Activated CD8-positive, alpha-beta memory T cell treated with anti-CD3 and anti-CD28 coated beads, Interleukin-2, amount 10 ng/mL, durations not matched to agents 7 days and 5 days (primary cell): ENCODE measurements at regions of chr14 and their contacts with region 1.

Region 1: DNA sequence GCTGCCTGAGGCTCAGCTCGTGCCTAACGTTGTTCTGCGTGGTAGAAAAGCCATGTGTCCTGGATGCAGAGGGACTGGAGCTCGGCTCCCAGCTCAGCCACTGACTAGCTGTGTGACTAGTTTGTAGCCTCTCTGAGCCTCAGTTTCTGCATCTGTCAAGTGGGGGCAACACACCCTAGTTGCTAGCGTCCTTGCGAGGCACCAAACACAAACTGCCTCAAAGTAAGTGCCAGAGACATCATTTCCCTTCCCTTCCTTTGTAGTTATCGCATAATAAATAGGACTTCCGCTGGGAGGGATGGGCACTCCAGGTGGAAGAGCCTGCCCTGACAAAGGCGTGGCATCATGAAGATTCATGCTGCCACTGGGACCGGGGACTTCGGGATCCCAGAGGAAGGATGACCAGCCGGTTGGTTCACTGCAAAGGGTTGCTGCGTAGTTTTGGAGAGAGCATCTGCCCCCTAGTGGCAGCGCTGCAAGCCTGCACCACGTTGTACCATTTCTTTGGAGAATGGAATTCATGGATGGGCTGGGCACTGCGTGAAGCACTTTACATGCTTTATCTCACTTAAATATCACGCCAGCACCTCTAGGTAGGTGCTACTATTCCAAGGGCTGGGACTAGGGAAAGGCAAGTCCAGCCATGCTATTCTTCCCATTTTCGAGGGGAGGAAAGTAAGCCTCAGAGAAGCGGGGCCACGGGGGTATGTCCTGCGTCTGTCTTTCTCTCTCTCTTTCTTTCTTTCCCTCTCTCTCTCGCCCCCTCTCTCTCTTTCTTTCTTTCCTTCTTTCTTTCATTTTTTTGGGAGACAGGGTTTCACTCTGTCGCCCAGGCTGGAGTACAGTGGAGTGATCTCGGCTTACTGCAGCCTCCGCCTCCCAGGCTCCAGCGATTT is 4.6 kb downstream of the CCDC197 start:
- DNase-seq: peak; percentile 72
- ATAC-seq: peak; percentile 87
- H3K4me3 Mint-ChIP-seq: no peak overlapping the region
- H3K27ac Mint-ChIP-seq: peak overlapping the region; percentile 17
- H3K4me1 Mint-ChIP-seq: peaks cover 33% of the 10 kb centered on the region
- H3K27me3 Mint-ChIP-seq: no peaks in the 10 kb centered on the region

Region 2: DNA sequence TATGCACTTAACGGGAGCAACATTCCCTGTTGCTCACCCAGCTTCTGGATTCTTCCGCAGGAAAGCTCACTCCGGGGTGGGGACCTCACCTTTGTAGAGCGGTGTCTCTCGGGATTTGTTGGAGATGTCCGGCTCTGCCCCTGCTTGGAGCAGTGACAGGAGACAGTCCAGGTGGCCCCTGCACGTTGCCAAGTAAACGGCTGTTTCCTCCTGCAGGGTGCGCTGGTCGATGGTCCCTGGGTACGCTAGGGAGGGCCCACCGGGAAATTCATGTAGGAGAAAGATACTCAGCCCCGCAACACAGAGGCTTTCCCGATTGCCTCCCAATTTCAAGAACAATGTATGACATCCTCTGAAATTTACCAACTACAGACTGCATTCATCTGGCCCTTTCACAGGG is 48.5 kb before region 1 on chr14:
- CTCF ChIA-PET with region 1: interaction called, 16 read pairs
- DNase-seq: no peak
- ATAC-seq: no peak
- H3K4me3 Mint-ChIP-seq: peak overlapping the region; percentile 99
- H3K27ac Mint-ChIP-seq: peak overlapping the region; percentile 99
- H3K4me1 Mint-ChIP-seq: peaks cover 89% of the 10 kb centered on the region
- H3K27me3 Mint-ChIP-seq: no peaks in the 10 kb centered on the region

Region 3: DNA sequence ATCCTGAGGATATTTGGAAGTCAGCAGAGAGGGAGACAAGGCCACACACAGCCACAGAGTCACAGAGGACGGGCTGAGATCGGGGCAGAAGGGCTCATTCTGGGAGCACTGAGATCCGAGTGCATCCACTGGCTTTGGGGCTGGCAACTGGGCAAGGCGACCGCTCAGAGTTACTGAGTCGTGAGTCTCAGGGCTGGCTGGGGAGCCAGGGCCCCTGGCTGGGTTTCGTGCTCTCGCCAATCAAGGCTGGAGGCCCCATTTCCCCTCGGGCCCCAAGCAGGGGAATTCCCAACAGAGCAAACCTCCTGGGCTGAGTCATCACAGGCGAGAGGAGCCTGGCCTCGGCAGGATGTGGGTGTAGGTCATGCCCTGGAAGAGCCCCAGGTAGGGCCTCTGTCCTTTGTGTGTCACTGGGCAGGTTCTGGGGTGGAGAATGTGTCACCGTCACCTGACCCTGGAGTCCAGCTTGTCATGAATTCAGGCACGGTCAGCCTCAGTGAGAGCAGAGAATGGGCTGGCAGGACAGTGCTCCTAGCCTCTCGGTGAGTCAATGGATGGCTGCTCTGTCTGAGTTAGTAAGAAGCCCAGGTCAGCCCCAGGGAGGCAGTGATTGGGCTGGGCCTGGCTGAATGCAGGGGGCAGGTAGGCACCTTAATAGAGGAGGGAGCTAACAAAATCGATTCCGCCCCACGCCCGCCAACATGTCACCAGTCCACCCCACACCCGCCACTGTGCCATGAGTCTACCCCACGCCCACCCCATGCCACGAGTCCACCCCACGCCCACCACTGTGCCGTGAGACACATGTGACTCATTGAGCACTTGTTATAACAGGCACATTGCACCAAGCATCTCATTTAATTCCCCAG is 42.3 kb before region 1 on chr14:
- CTCF ChIA-PET with region 1: interaction called, 14 read pairs
- DNase-seq: peak; percentile 98
- ATAC-seq: peak; percentile 71
- H3K4me3 Mint-ChIP-seq: peak overlapping the region; percentile 67
- H3K27ac Mint-ChIP-seq: peak overlapping the region; percentile 99
- H3K4me1 Mint-ChIP-seq: peaks cover 93% of the 10 kb centered on the region
- H3K27me3 Mint-ChIP-seq: no peaks in the 10 kb centered on the region

Region 4: GRCh38 chr14:93970549-93970946 is 31.2 kb before region 1 on chr14:
- CTCF ChIA-PET with region 1: interaction called, 32 read pairs
- DNase-seq: peak; percentile 80
- ATAC-seq: peak; percentile 62
- H3K4me3 Mint-ChIP-seq: peak overlapping the region; percentile 83
- H3K27ac Mint-ChIP-seq: peak overlapping the region; percentile 97
- H3K4me1 Mint-ChIP-seq: peaks cover 90% of the 10 kb centered on the region
- H3K27me3 Mint-ChIP-seq: no peaks in the 10 kb centered on the region

Region 5: DNA sequence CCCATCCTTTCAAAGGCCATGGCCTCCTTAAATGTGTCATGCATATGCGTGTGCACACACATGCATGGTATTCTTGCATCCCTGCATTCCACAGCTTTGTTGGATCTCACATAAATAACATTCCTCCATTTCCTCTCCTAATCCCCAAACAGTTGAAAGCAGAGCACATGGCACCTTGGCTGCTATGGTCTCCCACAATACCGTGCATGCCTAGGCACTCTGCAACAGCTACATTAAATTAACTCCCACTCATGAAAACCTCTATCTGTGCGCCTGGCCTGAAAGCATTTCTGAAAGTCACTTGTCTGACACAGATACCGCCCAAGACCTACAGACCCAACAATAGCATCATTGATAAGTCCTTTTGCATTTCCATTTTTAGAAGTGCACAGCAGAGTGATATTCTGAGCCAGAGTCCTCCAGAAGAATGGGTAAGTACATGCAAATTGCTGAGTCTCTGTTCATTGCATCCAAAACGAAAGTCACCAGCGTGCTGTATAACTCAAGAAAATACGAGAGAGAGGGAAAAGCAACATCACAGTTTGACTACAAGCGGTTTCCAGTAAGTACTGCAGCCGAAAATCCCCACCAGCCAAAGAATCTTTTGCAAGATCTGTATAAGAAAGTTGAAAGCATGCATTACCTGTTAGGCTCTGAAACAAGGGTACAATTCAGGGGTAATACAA is 25.8 kb before region 1 on chr14:
- CTCF ChIA-PET with region 1: interaction called, 33 read pairs
- DNase-seq: no peak
- ATAC-seq: peak; percentile 24
- H3K4me3 Mint-ChIP-seq: peak overlapping the region; percentile 83
- H3K27ac Mint-ChIP-seq: peak overlapping the region; percentile 93
- H3K4me1 Mint-ChIP-seq: peaks cover 92% of the 10 kb centered on the region
- H3K27me3 Mint-ChIP-seq: no peaks in the 10 kb centered on the region

Region 6: DNA sequence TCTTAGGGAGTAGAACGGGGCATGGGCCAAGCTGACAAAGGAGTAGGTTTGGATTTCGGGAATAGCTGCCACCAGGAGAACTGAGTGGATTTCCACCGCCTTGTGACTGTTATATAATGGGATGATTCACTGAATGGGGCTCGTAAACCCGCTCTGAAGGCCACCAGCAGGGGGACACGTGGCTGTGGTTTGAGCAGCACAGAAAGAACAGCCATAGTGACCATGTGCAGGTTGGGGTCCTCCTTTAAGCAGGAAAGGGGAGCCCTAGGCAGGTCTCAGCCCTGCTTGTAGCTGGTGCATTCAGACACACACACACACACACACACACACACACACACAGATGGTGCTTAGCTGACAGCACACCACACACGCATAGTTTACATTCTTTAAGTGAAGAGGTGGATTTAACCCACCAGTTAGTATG is 16.8 kb before region 1 on chr14:
- CTCF ChIA-PET with region 1: interaction called, 33 read pairs
- DNase-seq: no peak
- ATAC-seq: peak; percentile 14
- H3K4me3 Mint-ChIP-seq: no peak overlapping the region
- H3K27ac Mint-ChIP-seq: no peak overlapping the region
- H3K4me1 Mint-ChIP-seq: peaks cover 9% of the 10 kb centered on the region
- H3K27me3 Mint-ChIP-seq: no peaks in the 10 kb centered on the region

Region 7: DNA sequence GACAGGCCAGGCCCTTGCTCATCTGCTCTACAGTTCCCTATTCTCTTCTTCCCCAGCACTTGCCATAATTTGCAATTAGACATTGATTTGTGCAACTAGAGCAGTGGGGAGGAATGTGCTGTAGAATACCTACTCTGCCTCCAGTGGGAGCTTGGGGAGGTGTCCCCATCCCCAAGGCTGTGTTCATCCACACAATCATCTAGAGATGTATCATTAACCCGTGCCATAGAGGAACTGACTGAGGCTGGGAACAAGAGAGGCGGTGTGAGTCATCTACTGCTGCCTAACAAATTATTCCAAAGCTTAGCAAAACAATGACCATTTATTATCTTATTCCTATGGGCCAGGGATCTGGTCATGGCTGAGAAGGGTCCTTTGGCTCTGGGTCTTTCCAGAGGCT is 19.3 kb after region 1 on chr14:
- CTCF ChIA-PET with region 1: interaction called, 16 read pairs
- DNase-seq: no peak
- ATAC-seq: no peak
- H3K4me3 Mint-ChIP-seq: no peak overlapping the region
- H3K27ac Mint-ChIP-seq: peak overlapping the region; percentile 76
- H3K4me1 Mint-ChIP-seq: peaks cover 42% of the 10 kb centered on the region
- H3K27me3 Mint-ChIP-seq: peaks cover 8% of the 10 kb centered on the region